Caco-2 (cell line): ENCODE measurements at regions of chr14 and their contacts with region 1.

Region 1: DNA sequence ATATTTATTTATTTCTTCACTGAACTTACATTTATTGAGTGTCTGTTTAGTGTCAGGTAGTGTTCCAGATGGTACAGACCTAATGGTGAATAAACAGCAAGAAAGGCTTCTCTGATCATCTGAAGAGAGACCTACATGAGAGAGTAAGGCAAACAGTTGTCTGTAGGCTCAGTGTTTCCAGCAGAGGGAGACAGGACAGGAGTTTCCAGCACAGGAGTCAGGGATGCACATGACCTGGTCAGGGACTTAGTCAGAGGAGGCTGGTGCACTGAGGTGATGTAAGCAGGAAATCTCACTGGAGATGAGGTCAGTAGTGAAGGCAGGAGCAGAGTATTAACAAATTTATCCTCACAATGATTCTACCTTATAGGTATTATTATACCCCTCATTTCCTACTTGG is 233.2 kb downstream of the MDGA2 start:
- DNase-seq: peak; percentile 38 to 59
- H3K4me3 ChIP-seq: no peak overlapping the region
- H3K4me3 Mint-ChIP-seq: no peak overlapping the region
- H3K27ac Mint-ChIP-seq: no peak overlapping the region
- H3K4me1 ChIP-seq: no peaks in the 10 kb centered on the region
- H3K4me1 Mint-ChIP-seq: no peaks in the 10 kb centered on the region
- H3K27me3 ChIP-seq: no peaks in the 10 kb centered on the region
- H3K27me3 Mint-ChIP-seq: peaks cover 4% of the 10 kb centered on the region
- CTCF ChIP-seq: peak; percentile 25 to 52

Region 2: GRCh38 chr14:47269756-47270492 is 172.3 kb before region 1 on chr14:
- CTCF ChIA-PET with region 1: no interaction called
- POLR2A ChIA-PET with region 1: no interaction called
- intact Hi-C with region 1: no loop called
- DNase-seq: no peak
- H3K4me3 ChIP-seq: no peak overlapping the region
- H3K4me3 Mint-ChIP-seq: no peak overlapping the region
- H3K27ac Mint-ChIP-seq: no peak overlapping the region
- H3K4me1 ChIP-seq: no peaks in the 10 kb centered on the region
- H3K4me1 Mint-ChIP-seq: no peaks in the 10 kb centered on the region
- H3K27me3 ChIP-seq: no peaks in the 10 kb centered on the region
- H3K27me3 Mint-ChIP-seq: no peaks in the 10 kb centered on the region
- CTCF ChIP-seq: no peak

Region 3: GRCh38 chr14:47485421-47485820 is 43.2 kb after region 1 on chr14:
- CTCF ChIA-PET with region 1: no interaction called
- POLR2A ChIA-PET with region 1: no interaction called
- intact Hi-C with region 1: no loop called
- DNase-seq: no peak
- H3K4me3 ChIP-seq: no peak overlapping the region
- H3K4me3 Mint-ChIP-seq: no peak overlapping the region
- H3K27ac Mint-ChIP-seq: no peak overlapping the region
- H3K4me1 ChIP-seq: no peaks in the 10 kb centered on the region
- H3K4me1 Mint-ChIP-seq: no peaks in the 10 kb centered on the region
- H3K27me3 ChIP-seq: no peaks in the 10 kb centered on the region
- H3K27me3 Mint-ChIP-seq: peaks cover 4% of the 10 kb centered on the region
- CTCF ChIP-seq: no peak

Region 4: GRCh38 chr14:47539031-47539461 is 96.8 kb after region 1 on chr14:
- CTCF ChIA-PET with region 1: no interaction called
- POLR2A ChIA-PET with region 1: no interaction called
- intact Hi-C with region 1: loop called (anchors 1 kb)
- DNase-seq: peak in 1 of 2 experiments; percentile 23
- H3K4me3 ChIP-seq: no peak overlapping the region
- H3K4me3 Mint-ChIP-seq: no peak overlapping the region
- H3K27ac Mint-ChIP-seq: no peak overlapping the region
- H3K4me1 ChIP-seq: no peaks in the 10 kb centered on the region
- H3K4me1 Mint-ChIP-seq: no peaks in the 10 kb centered on the region
- H3K27me3 ChIP-seq: no peaks in the 10 kb centered on the region; the same call in 1 of the 2 replicates
- H3K27me3 Mint-ChIP-seq: no peaks in the 10 kb centered on the region
- CTCF ChIP-seq: peak; percentile 38 to 48

Region 5: GRCh38 chr14:47826809-47827208 is 384.6 kb after region 1 on chr14:
- CTCF ChIA-PET with region 1: no interaction called
- POLR2A ChIA-PET with region 1: no interaction called
- intact Hi-C with region 1: loop called (anchors 10 kb)
- DNase-seq: no peak
- H3K4me3 ChIP-seq: no peak overlapping the region
- H3K4me3 Mint-ChIP-seq: no peak overlapping the region
- H3K27ac Mint-ChIP-seq: no peak overlapping the region
- H3K4me1 ChIP-seq: no peaks in the 10 kb centered on the region
- H3K4me1 Mint-ChIP-seq: no peaks in the 10 kb centered on the region
- H3K27me3 ChIP-seq: no peaks in the 10 kb centered on the region
- H3K27me3 Mint-ChIP-seq: peaks cover 3% of the 10 kb centered on the region
- CTCF ChIP-seq: no peak